ENCODE measurements at regions of chr1 and their contacts with region 1.

Region 1: GRCh38 chr1:155410931-155411330 is 90.2 kb downstream of the RUSC1 start:
- DNase-seq: no peak
- H3K4me3 ChIP-seq: no peak overlapping the region
- H3K27ac ChIP-seq: no peak overlapping the region
- H3K4me1 ChIP-seq: no peaks in the 10 kb centered on the region
- H3K27me3 ChIP-seq: no peaks in the 10 kb centered on the region
- CTCF ChIP-seq: no peak
- POLR2A ChIP-seq: no peak

Region 2: GRCh38 chr1:154729031-154729442 is 681.9 kb before region 1 on chr1:
- intact Hi-C with region 1: loop called (anchors 5 kb)
- DNase-seq: no peak
- H3K4me3 ChIP-seq: no peak overlapping the region
- H3K27ac ChIP-seq: peak overlapping the region; percentile 33 to 69
- H3K4me1 ChIP-seq: peaks cover 0 to 9% of the 10 kb centered on the region in 2 donors
- H3K27me3 ChIP-seq: no peaks in the 10 kb centered on the region
- CTCF ChIP-seq: no peak
- POLR2A ChIP-seq: no peak